ENCODE measurements at regions of chr5 and their contacts with region 1.

Region 1: GRCh38 chr5:36264202-36264760 is 22.6 kb upstream of the NADK2 start:
- DNase-seq: no peak
- ATAC-seq: no peak

Region 2: GRCh38 chr5:36089989-36090564 is 174.2 kb before region 1 on chr5:
- intact Hi-C with region 1: no loop called
- DNase-seq: no peak
- ATAC-seq: no peak

Region 3: GRCh38 chr5:36198281-36198680 is 66.0 kb before region 1 on chr5:
- intact Hi-C with region 1: no loop called
- DNase-seq: no peak
- ATAC-seq: no peak

Region 4: GRCh38 chr5:36346896-36347690 is 82.8 kb after region 1 on chr5:
- intact Hi-C with region 1: no loop called
- DNase-seq: no peak
- ATAC-seq: no peak

Region 5: DNA sequence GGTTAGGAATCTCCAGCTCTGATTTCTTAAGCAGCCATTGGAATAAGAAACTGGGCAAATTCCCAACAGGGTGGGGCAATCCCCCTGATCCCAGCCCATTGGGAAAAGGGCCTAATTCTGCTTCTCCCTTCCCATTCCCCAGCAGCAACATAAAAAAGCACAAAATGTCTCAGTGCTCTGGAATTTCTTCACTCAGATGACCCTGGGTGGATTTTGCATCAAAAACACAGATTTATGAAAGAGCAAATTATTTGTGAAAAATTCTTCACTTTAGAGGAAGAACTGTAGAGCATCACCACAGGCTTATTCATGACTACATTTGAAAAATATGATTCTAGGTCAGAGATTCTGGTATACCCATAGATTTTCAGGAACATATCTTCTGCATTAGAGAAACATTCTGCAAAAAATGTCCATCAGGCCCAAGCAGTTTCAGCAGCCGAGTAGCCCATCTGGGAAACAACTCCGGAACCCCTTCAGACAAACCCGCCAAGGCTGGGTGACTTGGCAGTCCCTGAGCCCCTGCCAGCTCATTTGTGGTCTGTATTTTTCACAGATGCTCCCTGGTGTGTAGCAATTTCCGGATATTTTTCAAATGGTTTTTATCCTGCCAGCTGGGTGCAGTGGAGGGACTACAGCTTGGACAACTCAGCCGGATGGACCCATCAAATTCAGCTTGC is 139.5 kb after region 1 on chr5:
- intact Hi-C with region 1: loop called (anchors 5 to 10 kb)
- DNase-seq: peak; percentile 56
- ATAC-seq: peak; percentile 67 to 78

Region 6: GRCh38 chr5:36695677-36696673 is 431.7 kb after region 1 on chr5:
- intact Hi-C with region 1: loop called in 1 of 2 experiments (anchors 5 kb)
- DNase-seq: peak; percentile 59
- ATAC-seq: peak in 1 of 2 donors; percentile 29

Measured in left cardiac atrium (tissue), 4 donors.